HCT116 (cell line): ENCODE measurements at regions of chr12 and their contacts with region 1.

Region 1: GRCh38 chr12:100668945-100669536 is 95.6 kb downstream of the GAS2L3 start:
- DNase-seq: peak; percentile 66
- ATAC-seq: peak; percentile 95
- H3K4me3 ChIP-seq: no peak overlapping the region
- H3K27ac ChIP-seq: no peak overlapping the region
- H3K4me1 ChIP-seq: no peaks in the 10 kb centered on the region
- H3K27me3 ChIP-seq: no peaks in the 10 kb centered on the region
- CTCF ChIP-seq: peak; percentile 77 to 94 (median 94)
- POLR2A ChIP-seq: no peak
- RAD21 ChIP-seq: peak; percentile 74

Region 2: GRCh38 chr12:100234598-100235304 is 434.3 kb before region 1 on chr12:
- CTCF ChIA-PET with region 1: no interaction called
- POLR2A ChIA-PET with region 1: no interaction called
- RAD21 ChIA-PET with region 1: no interaction called
- intact Hi-C with region 1: loop called (anchors 5 kb)
- DNase-seq: peak; percentile 29
- ATAC-seq: peak; percentile 82
- H3K4me3 ChIP-seq: no peak overlapping the region
- H3K27ac ChIP-seq: no peak overlapping the region
- H3K4me1 ChIP-seq: peaks cover 6 to 7% of the 10 kb centered on the region in 2 experiments; a peak in 3 of 4 replicates
- H3K27me3 ChIP-seq: no peaks in the 10 kb centered on the region
- CTCF ChIP-seq: peak; percentile 66 to 77 (median 73); a peak in 5 of 6 replicates
- POLR2A ChIP-seq: no peak
- RAD21 ChIP-seq: peak; percentile 80

Region 3: GRCh38 chr12:100348657-100349454 is 320.2 kb before region 1 on chr12:
- CTCF ChIA-PET with region 1: interaction called, 5 read pairs
- POLR2A ChIA-PET with region 1: no interaction called
- RAD21 ChIA-PET with region 1: no interaction called
- intact Hi-C with region 1: loop called (anchors 1 kb)
- DNase-seq: peak; percentile 33
- ATAC-seq: peak; percentile 76
- H3K4me3 ChIP-seq: no peak overlapping the region
- H3K27ac ChIP-seq: no peak overlapping the region
- H3K4me1 ChIP-seq: no peaks in the 10 kb centered on the region
- H3K27me3 ChIP-seq: peaks cover 3% of the 10 kb centered on the region; the same call in 1 of the 2 replicates
- CTCF ChIP-seq: peak; percentile 16 to 80 (median 57); a peak in 4 of 6 replicates
- POLR2A ChIP-seq: no peak
- RAD21 ChIP-seq: peak; percentile 81

Region 4: GRCh38 chr12:100733817-100734593 is 65.0 kb after region 1 on chr12:
- CTCF ChIA-PET with region 1: interaction called, 4 read pairs
- POLR2A ChIA-PET with region 1: no interaction called
- RAD21 ChIA-PET with region 1: no interaction called
- intact Hi-C with region 1: loop called (anchors 5 kb)
- DNase-seq: peak; percentile 21
- ATAC-seq: peak; percentile 67
- H3K4me3 ChIP-seq: no peak overlapping the region
- H3K27ac ChIP-seq: no peak overlapping the region
- H3K4me1 ChIP-seq: no peaks in the 10 kb centered on the region
- H3K27me3 ChIP-seq: no peaks in the 10 kb centered on the region
- CTCF ChIP-seq: peak; percentile 57 to 62 (median 58); a peak in 5 of 6 replicates
- POLR2A ChIP-seq: no peak
- RAD21 ChIP-seq: peak; percentile 62

Region 5: GRCh38 chr12:100741084-100741711 is 72.2 kb after region 1 on chr12:
- CTCF ChIA-PET with region 1: interaction called, 4 read pairs
- POLR2A ChIA-PET with region 1: no interaction called
- RAD21 ChIA-PET with region 1: no interaction called
- intact Hi-C with region 1: loop called (anchors 1 kb)
- DNase-seq: peak; percentile 6
- ATAC-seq: peak; percentile 75
- H3K4me3 ChIP-seq: no peak overlapping the region
- H3K27ac ChIP-seq: no peak overlapping the region
- H3K4me1 ChIP-seq: no peaks in the 10 kb centered on the region
- H3K27me3 ChIP-seq: no peaks in the 10 kb centered on the region
- CTCF ChIP-seq: peak; percentile 46 to 73 (median 65); a peak in 5 of 6 replicates
- POLR2A ChIP-seq: no peak
- RAD21 ChIP-seq: peak; percentile 63

Region 6: GRCh38 chr12:100773734-100774133 is 104.7 kb after region 1 on chr12:
- CTCF ChIA-PET with region 1: no interaction called
- POLR2A ChIA-PET with region 1: no interaction called
- RAD21 ChIA-PET with region 1: no interaction called
- intact Hi-C with region 1: no loop called
- DNase-seq: no peak
- ATAC-seq: no peak
- H3K4me3 ChIP-seq: no peak overlapping the region
- H3K27ac ChIP-seq: no peak overlapping the region
- H3K4me1 ChIP-seq: no peaks in the 10 kb centered on the region
- H3K27me3 ChIP-seq: no peaks in the 10 kb centered on the region
- CTCF ChIP-seq: no peak
- POLR2A ChIP-seq: no peak
- RAD21 ChIP-seq: no peak